ENCODE measurements at regions of chr6 and their contacts with region 1.

Region 1: DNA sequence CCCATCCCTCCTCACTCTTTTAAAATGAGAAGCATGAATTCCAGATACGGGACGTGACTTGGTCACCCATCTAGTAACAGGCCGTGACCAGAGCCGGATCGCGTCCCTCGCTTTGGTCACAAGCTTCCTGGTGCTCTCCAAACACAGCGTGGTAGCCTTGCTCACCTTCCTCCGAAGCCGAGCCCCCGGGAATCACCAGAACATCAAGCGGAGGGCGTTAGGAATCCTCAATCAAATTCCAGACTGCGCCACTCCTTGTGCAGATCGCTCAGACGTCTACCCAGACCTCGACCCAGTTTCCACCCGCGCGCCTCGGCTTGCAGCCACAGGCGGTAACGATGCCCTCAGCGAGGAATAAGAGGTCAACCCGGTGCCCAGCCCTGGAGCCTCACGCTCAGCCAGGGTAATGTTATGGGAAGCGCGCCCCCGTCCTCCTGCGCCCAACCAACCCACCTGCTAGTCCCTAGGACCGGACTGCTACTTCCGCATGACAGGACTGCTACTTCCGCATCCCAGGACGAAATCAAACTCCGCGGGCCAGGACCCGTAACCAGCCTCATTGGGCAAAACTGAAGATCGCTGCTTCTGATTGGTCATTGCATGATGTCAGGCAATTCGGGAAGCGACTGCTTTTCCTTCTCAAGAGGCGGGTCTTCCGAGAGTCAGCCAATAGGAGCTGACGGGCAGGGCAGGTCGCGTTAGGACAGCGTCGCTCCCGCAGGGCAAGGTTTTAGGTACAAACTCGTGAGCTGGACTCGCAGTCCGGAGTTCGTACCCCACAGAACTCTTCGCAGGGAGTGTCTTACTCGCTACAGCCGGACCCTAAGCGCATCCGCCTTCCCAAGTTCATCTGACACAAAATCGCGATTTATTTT is at the start of gene MTFR2:
- DNase-seq: peak; percentile 90 to 94
- ATAC-seq: peak; percentile 96 to 99 (median 97)
- H3K4me3 ChIP-seq: peak within 1 kb of the TSS; percentile 78
- H3K27ac ChIP-seq: peak within 1 kb of the TSS; percentile 46
- H3K4me1 ChIP-seq: peaks cover 17% of the 10 kb centered on the region
- H3K27me3 ChIP-seq: no peaks in the 10 kb centered on the region
- CTCF ChIP-seq: no peak
- total RNA-seq, gene MTFR2: 0.20 to 0.95 (median 0.62) TPM in 3 of 4 donors, not detected in the other

Region 2: DNA sequence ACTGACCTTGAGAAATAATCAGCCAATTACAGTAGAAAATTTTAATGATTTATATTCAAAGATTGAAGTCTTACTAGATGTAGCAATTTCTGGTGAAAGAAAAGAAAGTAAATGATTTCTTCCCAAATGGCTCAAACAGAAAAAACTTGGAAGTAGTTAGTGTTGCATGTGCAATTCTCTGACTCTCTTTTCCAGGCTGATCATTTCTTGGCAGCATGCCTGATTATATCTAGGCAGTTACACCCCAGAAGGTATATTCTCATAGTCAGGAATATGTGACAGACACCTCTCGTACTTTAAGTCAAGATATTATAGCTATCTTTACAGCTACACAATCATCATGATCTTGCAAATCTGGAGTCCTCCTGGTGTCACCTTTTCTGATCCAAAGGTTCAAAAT is 275.6 kb before region 1 on chr6:
- intact Hi-C with region 1: no loop called
- DNase-seq: no peak
- ATAC-seq: no peak
- H3K4me3 ChIP-seq: no peak overlapping the region
- H3K27ac ChIP-seq: no peak overlapping the region
- H3K4me1 ChIP-seq: no peaks in the 10 kb centered on the region
- H3K27me3 ChIP-seq: no peaks in the 10 kb centered on the region
- CTCF ChIP-seq: no peak

Region 3: GRCh38 chr6:136289579-136290409 is 39.7 kb after region 1 on chr6 and contains the start of gene BCLAF1:
- intact Hi-C with region 1: loop called in 1 of 2 experiments (anchors 5 kb)
- DNase-seq: peak; percentile 100
- ATAC-seq: peak; percentile 92 to 95 (median 94)
- H3K4me3 ChIP-seq: peak within 1 kb of the TSS; percentile 96
- H3K27ac ChIP-seq: peak within 1 kb of the TSS; percentile 100
- H3K4me1 ChIP-seq: peaks cover 45% of the 10 kb centered on the region
- H3K27me3 ChIP-seq: no peaks in the 10 kb centered on the region
- CTCF ChIP-seq: no peak
- total RNA-seq, gene BCLAF1: 82.5 to 110 (median 102) TPM

Measured in psoas muscle (tissue), 8 donors.